ENCODE measurements at regions of chr2 and their contacts with region 1.

Region 1: GRCh38 chr2:72150157-72150865 is 2.6 kb upstream of the CYP26B1 start:
- DNase-seq: peak; percentile 93
- ATAC-seq: peak; percentile 80
- H3K4me3 ChIP-seq: peak overlapping the region; percentile 74
- H3K27ac ChIP-seq: no peak overlapping the region
- H3K4me1 ChIP-seq: peaks cover 24% of the 10 kb centered on the region
- H3K27me3 ChIP-seq: peaks cover 29% of the 10 kb centered on the region
- CTCF ChIP-seq: peak; percentile 81

Region 2: DNA sequence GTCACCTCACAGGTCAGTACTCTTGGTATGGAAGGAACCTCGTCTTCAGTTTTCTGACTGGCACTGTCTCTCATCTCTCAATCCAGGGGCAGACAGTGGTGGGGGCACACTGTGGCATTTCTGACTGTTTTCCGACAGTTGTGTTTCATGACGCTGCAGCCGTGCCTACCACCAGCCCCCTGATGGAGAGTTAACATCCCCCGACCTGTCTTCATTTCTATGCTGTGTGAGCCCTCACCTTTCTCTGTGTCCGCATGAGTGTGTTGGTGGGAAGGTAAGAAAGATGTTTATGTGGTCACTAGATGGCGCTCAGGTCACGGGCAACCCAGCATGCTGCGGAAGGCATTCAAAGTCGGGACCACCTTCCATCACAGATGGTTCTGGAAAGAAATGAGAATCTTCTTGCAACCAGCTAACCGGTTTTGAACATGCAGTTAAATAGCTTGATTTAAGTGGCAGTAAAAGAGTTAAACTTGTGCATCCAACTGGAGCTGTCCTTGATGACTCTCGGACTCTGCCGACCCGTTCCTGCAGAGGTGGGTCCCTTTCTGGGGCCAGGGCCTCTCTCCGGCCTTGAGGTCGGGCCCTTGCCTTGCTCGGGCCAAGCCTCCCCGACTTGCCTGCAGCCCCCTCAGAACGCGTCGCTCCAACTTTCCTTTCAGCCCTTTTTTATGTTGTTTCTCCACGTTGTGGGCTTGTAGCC is 604.6 kb before region 1 on chr2:
- CTCF ChIA-PET with region 1: interaction called, 4 read pairs
- POLR2A ChIA-PET with region 1: no interaction called
- intact Hi-C with region 1: loop called (anchors 1 kb)
- DNase-seq: peak; percentile 75
- ATAC-seq: peak; percentile 93
- H3K4me3 ChIP-seq: peak overlapping the region; percentile 64
- H3K27ac ChIP-seq: no peak overlapping the region
- H3K4me1 ChIP-seq: peaks cover 9% of the 10 kb centered on the region; the same call in 1 of the 2 replicates
- H3K27me3 ChIP-seq: no peaks in the 10 kb centered on the region
- CTCF ChIP-seq: peak; percentile 95

Region 3: DNA sequence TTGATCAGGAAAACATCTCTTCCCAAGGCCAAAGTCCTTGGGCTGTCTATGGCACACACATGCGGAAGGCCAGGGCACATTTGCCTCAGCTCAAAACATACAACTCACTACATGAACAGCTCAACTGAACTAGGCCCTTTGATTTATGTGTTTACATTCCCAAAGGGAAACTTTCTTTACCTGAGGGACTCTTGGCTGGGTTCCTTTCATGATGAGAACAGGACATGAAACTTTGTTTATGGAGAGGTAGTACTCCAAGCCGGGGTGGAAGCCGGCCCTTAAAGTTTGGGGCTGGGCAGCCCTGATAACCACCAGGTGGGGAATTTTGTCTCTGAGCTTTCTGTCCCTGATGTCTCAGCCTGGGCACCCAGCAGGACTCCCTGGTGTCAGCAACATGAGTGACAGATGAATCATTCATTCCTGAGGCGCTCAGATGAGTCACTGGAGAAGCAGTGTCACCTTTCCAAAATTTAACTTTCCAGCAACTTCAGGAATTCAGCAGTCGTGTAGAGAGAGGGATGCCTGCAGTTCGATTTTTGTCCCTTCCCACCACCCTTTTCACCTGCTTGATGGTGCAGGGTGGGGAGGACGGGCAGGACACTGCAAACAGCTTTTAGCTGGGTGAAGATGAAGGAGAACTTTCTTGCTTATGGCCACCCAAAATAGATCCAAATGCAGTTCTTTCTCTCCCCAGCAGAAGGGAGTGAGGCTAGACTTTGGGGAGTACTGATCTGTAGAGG is 365.4 kb before region 1 on chr2:
- CTCF ChIA-PET with region 1: no interaction called
- POLR2A ChIA-PET with region 1: no interaction called
- intact Hi-C with region 1: loop called (anchors 5 kb)
- DNase-seq: peak; percentile 95
- ATAC-seq: peak; percentile 84
- H3K4me3 ChIP-seq: peak overlapping the region; percentile 18; the same call in 1 of the 2 replicates
- H3K27ac ChIP-seq: peak overlapping the region; percentile 79
- H3K4me1 ChIP-seq: peaks cover 44% of the 10 kb centered on the region
- H3K27me3 ChIP-seq: no peaks in the 10 kb centered on the region
- CTCF ChIP-seq: peak; percentile 45; the same call in 1 of the 2 replicates

Region 4: GRCh38 chr2:71923887-71924533 is 226.3 kb before region 1 on chr2:
- CTCF ChIA-PET with region 1: interaction called, 47 read pairs
- POLR2A ChIA-PET with region 1: no interaction called
- intact Hi-C with region 1: loop called (anchors 1 kb)
- DNase-seq: peak; percentile 85
- ATAC-seq: peak; percentile 94
- H3K4me3 ChIP-seq: no peak overlapping the region
- H3K27ac ChIP-seq: no peak overlapping the region
- H3K4me1 ChIP-seq: peaks cover 6% of the 10 kb centered on the region
- H3K27me3 ChIP-seq: no peaks in the 10 kb centered on the region
- CTCF ChIP-seq: peak; percentile 92

Region 5: DNA sequence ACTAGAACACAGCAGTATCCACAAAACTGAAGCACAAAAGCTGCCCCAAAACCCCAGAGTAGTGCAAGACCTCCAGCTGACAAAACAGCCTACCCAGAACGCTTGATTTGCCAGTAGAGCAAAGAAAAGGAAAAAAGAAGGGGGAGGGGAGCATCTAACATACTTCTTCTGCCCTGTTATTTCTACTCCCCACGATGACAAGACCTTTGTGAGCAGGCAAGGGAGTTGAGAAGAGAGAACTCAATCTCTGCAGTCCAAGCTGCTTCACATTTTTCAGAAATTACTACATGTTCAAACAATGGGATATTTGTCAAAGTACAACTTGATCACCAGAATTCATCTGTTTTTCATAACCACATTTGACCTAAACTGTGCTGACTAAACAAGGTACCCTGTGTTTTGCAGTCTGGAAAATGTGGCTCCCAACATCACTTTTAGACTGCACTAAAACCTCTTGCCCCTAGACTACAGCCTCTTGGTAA is 388.8 kb after region 1 on chr2:
- CTCF ChIA-PET with region 1: no interaction called
- POLR2A ChIA-PET with region 1: no interaction called
- intact Hi-C with region 1: no loop called
- DNase-seq: peak; percentile 12
- ATAC-seq: peak; percentile 37; the same call in 1 of the 2 replicates
- H3K4me3 ChIP-seq: no peak overlapping the region
- H3K27ac ChIP-seq: no peak overlapping the region
- H3K4me1 ChIP-seq: peaks cover under 1% of the 10 kb centered on the region
- H3K27me3 ChIP-seq: no peaks in the 10 kb centered on the region
- CTCF ChIP-seq: no peak

Region 6: GRCh38 chr2:72579591-72580180 is 429.4 kb after region 1 on chr2:
- CTCF ChIA-PET with region 1: interaction called, 16 read pairs
- POLR2A ChIA-PET with region 1: no interaction called
- intact Hi-C with region 1: loop called (anchors 1 kb)
- DNase-seq: peak; percentile 68
- ATAC-seq: peak; percentile 31; the same call in 1 of the 2 replicates
- H3K4me3 ChIP-seq: no peak overlapping the region
- H3K27ac ChIP-seq: no peak overlapping the region
- H3K4me1 ChIP-seq: no peaks in the 10 kb centered on the region
- H3K27me3 ChIP-seq: no peaks in the 10 kb centered on the region
- CTCF ChIP-seq: peak; percentile 84

Region 7: GRCh38 chr2:73877071-73877802 is 1726.9 kb after region 1 on chr2:
- CTCF ChIA-PET with region 1: no interaction called
- POLR2A ChIA-PET with region 1: no interaction called
- intact Hi-C with region 1: no loop called
- DNase-seq: no peak
- ATAC-seq: 0 out of 2 replicates have a peak, but pooled peaks have one; percentile 18
- H3K4me3 ChIP-seq: no peak overlapping the region
- H3K27ac ChIP-seq: no peak overlapping the region
- H3K4me1 ChIP-seq: no peaks in the 10 kb centered on the region
- H3K27me3 ChIP-seq: no peaks in the 10 kb centered on the region
- CTCF ChIP-seq: no peak

Measured in PC-3 (cell line).